GM12878 (cell line): ENCODE measurements at regions of chr6 and their contacts with region 1.

Region 1: GRCh38 chr6:85537055-85537494 is 56.6 kb downstream of the SNX14 start:
- DNase-seq: no peak
- ATAC-seq: no peak
- H3K4me3 ChIP-seq: no peak overlapping the region
- H3K27ac ChIP-seq: no peak overlapping the region
- H3K4me1 ChIP-seq: no peaks in the 10 kb centered on the region
- H3K27me3 ChIP-seq: no peaks in the 10 kb centered on the region
- CTCF ChIP-seq: peak in 2 of 3 experiments; percentile 25 to 38; a peak in 3 of 6 replicates
- EP300 ChIP-seq: no peak
- POLR2A ChIP-seq: no peak
- RAD21 ChIP-seq: peak; percentile 1; the same call in 1 of the 2 replicates

Region 2: GRCh38 chr6:85354761-85355618 is 182.1 kb before region 1 on chr6:
- CTCF ChIA-PET with region 1: interaction called, 57 read pairs
- POLR2A ChIA-PET with region 1: interaction called, 11 read pairs
- RAD21 ChIA-PET with region 1: interaction called, 44 read pairs
- SMC1A ChIA-PET with region 1: interaction called, 21 read pairs
- in situ Hi-C with region 1: no loop called
- intact Hi-C with region 1: loop called (anchors 1 kb)
- DNase-seq: peak; percentile 25
- ATAC-seq: peak; percentile 99
- H3K4me3 ChIP-seq: no peak overlapping the region
- H3K27ac ChIP-seq: no peak overlapping the region
- H3K4me1 ChIP-seq: no peaks in the 10 kb centered on the region
- H3K27me3 ChIP-seq: no peaks in the 10 kb centered on the region
- CTCF ChIP-seq: peak; percentile 90 to 93 (median 91)
- EP300 ChIP-seq: no peak
- POLR2A ChIP-seq: no peak
- RAD21 ChIP-seq: peak; percentile 96

Region 3: DNA sequence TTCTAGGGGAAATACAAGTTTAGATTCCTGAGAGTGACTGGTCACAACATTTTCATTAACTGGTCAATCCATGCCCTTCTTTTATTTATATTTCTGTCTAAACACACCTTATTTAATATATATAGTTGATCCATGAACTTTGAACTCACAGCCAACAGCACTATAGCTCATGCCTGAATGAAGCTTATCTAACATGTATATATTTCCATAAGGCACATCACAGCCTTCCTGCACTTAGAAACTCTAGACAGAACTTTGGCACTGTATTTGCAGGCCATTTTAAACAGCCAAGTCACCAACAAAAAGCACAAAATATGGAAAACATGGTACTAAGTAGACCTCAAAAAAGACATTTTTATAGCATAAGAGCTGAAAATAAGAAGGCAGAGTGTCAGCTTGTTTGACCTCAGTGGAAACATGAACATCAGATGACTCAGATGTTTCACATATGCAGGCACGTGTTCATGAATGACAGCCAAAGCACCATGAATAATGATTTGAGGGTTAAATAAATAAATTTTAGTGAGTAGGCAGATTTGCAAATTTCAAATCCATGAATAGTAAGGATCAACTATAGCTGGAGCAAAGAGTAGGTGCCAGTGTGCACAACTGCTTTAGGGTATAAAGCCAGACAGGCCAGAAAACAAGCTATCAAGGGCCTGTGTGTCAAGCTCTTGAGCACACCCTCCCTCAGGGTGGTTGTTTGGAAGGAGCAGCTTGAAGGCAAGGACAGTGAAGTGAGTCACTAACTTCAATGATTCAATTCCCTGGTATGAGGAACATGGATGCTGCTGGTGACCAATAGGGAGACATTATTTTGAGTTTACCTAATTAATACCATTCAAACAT is 176.1 kb before region 1 on chr6:
- CTCF ChIA-PET with region 1: interaction called, 57 read pairs
- POLR2A ChIA-PET with region 1: interaction called, 11 read pairs
- RAD21 ChIA-PET with region 1: interaction called, 44 read pairs
- SMC1A ChIA-PET with region 1: interaction called, 21 read pairs
- in situ Hi-C with region 1: no loop called
- intact Hi-C with region 1: no loop called
- DNase-seq: no peak
- ATAC-seq: peak; percentile 31; the same call in 1 of the 3 replicates
- H3K4me3 ChIP-seq: no peak overlapping the region
- H3K27ac ChIP-seq: no peak overlapping the region
- H3K4me1 ChIP-seq: no peaks in the 10 kb centered on the region
- H3K27me3 ChIP-seq: no peaks in the 10 kb centered on the region
- CTCF ChIP-seq: no peak
- EP300 ChIP-seq: no peak
- POLR2A ChIP-seq: no peak
- RAD21 ChIP-seq: no peak

Region 4: GRCh38 chr6:85593438-85594196 is 56.5 kb after region 1 on chr6 and contains the start of gene SNX14:
- CTCF ChIA-PET with region 1: interaction called, 12 read pairs
- POLR2A ChIA-PET with region 1: no interaction called
- RAD21 ChIA-PET with region 1: interaction called, 4 read pairs
- SMC1A ChIA-PET with region 1: interaction called, 3 read pairs
- in situ Hi-C with region 1: no loop called
- intact Hi-C with region 1: no loop called
- DNase-seq: peak; percentile 86
- ATAC-seq: peak; percentile 92
- H3K4me3 ChIP-seq: peak within 1 kb of the TSS; percentile 95
- H3K27ac ChIP-seq: peak within 1 kb of the TSS; percentile 67
- H3K4me1 ChIP-seq: no peaks in the 10 kb centered on the region
- H3K27me3 ChIP-seq: no peaks in the 10 kb centered on the region
- CTCF ChIP-seq: 0 out of 6 replicates have a peak, but pooled peaks of 1 of the 3 experiments have one; percentile 8
- EP300 ChIP-seq: 0 out of 4 replicates have a peak, but pooled peaks of 1 of the 2 experiments have one; percentile 8
- POLR2A ChIP-seq: peak; percentile 96
- RAD21 ChIP-seq: no peak
- polyA plus RNA-seq, gene SNX14: 34.2 to 50.9 TPM